Activated CD4-positive, alpha-beta T cell treated with anti-CD3 and anti-CD28 coated beads, Interleukin-2, amount 10 ng/mL, durations not matched to agents 24 days and 14 days (primary cell): ENCODE measurements at regions of chr1 and their contacts with region 1.

Region 1: DNA sequence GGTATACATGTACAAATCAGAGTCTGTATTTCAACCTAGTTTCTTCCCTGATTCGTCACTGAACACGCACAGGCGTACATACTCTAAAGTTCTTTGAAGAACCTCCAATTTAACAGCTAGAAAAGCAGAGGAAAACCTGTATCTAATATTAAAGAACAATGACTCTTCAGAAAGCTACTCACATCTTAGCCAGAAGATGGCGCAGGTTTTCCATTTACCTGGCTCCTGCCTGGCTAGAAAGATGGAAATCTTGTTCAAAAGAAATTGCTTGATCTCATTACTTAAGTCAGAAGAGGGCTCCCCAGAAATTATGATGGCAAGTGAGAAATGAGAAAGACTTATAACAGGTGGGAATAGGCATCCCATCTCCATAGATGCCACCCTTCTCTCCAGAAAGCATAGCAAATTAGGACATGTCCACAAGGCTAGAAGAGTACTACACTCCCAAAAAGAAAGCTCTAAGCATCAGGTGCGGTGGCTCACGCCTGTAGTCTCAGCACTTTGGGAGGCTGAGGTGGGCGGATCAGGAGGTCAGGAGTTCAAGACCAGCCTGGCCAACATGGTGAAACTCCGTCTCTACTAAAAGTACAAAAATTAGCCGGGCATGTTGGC is 19.0 kb upstream of the L1TD1 start:
- DNase-seq: peak; percentile 82
- H3K4me3 Mint-ChIP-seq: no peak overlapping the region
- H3K27ac Mint-ChIP-seq: no peak overlapping the region
- H3K4me1 Mint-ChIP-seq: no peaks in the 10 kb centered on the region
- H3K27me3 Mint-ChIP-seq: no peaks in the 10 kb centered on the region

Region 2: DNA sequence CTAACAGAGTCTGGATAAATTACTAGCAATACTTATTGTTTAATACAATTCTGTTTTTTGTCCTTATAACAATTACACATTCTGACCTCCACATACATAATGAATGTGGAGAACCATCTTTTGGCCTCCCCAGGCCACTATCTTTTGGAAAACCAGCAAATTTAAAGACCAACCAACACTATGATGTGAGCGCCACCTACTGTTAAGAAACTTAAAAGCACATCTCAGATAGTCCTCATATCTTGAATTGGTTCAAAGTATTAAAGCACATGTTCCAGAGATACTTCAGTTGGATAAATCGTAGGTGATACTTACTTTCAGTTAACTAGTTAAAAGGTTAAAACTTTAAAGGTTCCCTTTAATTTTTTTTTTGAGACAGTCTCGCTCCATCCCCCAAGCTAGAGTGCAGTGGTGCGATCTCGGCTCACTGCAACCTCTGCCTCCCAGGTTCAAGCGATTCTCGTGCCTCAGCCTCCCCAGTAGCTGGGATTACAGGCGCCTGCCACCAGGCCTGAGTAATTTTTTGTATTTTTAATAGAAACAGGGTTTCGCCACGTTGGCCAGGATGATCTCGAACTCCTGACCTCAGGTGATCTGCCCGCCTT is 231.8 kb after region 1 on chr1:
- intact Hi-C with region 1: loop called (anchors 1 kb)
- DNase-seq: peak; percentile 73
- H3K4me3 Mint-ChIP-seq: no peak overlapping the region
- H3K27ac Mint-ChIP-seq: no peak overlapping the region
- H3K4me1 Mint-ChIP-seq: no peaks in the 10 kb centered on the region
- H3K27me3 Mint-ChIP-seq: peaks cover 7% of the 10 kb centered on the region

Region 3: GRCh38 chr1:62637392-62638105 is 461.9 kb after region 1 on chr1:
- intact Hi-C with region 1: no loop called
- DNase-seq: no peak
- H3K4me3 Mint-ChIP-seq: no peak overlapping the region
- H3K27ac Mint-ChIP-seq: no peak overlapping the region
- H3K4me1 Mint-ChIP-seq: no peaks in the 10 kb centered on the region
- H3K27me3 Mint-ChIP-seq: no peaks in the 10 kb centered on the region